ENCODE measurements at regions of chr10 and their contacts with region 1.

Region 1: DNA sequence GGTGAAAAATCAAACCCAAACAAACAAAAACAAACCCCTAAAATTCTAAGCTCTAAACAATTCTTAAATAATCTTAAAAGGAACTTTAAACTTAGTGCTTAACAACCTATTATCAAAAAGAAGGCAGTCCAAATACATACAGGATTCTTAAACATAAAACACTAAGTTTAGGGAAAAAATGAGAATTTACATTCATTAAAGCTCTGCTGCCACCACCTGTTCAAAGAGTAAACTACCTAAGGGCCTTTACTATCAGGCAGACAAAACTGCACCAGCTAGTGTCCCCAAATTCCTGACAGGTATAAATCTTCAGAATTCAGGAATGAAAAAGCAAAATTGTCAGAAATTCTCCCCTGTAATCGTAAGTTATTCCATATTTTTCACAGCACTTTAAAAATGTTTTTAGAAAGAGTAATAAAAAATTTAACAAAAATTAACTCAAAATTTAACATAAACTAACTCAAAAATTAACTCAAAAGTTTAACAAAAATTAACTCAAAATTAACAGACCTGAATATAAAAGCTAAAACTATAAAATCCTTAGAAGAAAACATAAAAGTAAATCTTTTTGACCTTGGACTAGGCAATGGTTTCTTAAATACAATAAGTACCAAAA is 55.1 kb downstream of the PDZD8 start:
- DNase-seq: peak; percentile 23
- H3K4me3 ChIP-seq: no peak overlapping the region; a peak in 1 of 4 replicates
- H3K27ac ChIP-seq: no peak overlapping the region
- H3K4me1 ChIP-seq: no peaks in the 10 kb centered on the region
- H3K27me3 ChIP-seq: no peaks in the 10 kb centered on the region
- CTCF ChIP-seq: peak; percentile 72
- EP300 ChIP-seq: no peak
- RAD21 ChIP-seq: peak; percentile 79

Region 2: GRCh38 chr10:117148284-117148683 is 171.9 kb before region 1 on chr10:
- CTCF ChIA-PET with region 1: no interaction called
- POLR2A ChIA-PET with region 1: no interaction called
- DNase-seq: no peak
- H3K4me3 ChIP-seq: no peak overlapping the region
- H3K27ac ChIP-seq: no peak overlapping the region
- H3K4me1 ChIP-seq: no peaks in the 10 kb centered on the region; a peak in 1 of 4 replicates
- H3K27me3 ChIP-seq: peaks cover 3% of the 10 kb centered on the region; the same call in 1 of the 2 replicates
- CTCF ChIP-seq: no peak
- EP300 ChIP-seq: no peak
- RAD21 ChIP-seq: no peak

Region 3: GRCh38 chr10:117204316-117204715 is 115.8 kb before region 1 on chr10:
- CTCF ChIA-PET with region 1: interaction called, 37 read pairs
- POLR2A ChIA-PET with region 1: no interaction called
- DNase-seq: no peak
- H3K4me3 ChIP-seq: no peak overlapping the region
- H3K27ac ChIP-seq: no peak overlapping the region
- H3K4me1 ChIP-seq: no peaks in the 10 kb centered on the region
- H3K27me3 ChIP-seq: no peaks in the 10 kb centered on the region
- CTCF ChIP-seq: no peak
- EP300 ChIP-seq: no peak
- RAD21 ChIP-seq: no peak

Region 4: DNA sequence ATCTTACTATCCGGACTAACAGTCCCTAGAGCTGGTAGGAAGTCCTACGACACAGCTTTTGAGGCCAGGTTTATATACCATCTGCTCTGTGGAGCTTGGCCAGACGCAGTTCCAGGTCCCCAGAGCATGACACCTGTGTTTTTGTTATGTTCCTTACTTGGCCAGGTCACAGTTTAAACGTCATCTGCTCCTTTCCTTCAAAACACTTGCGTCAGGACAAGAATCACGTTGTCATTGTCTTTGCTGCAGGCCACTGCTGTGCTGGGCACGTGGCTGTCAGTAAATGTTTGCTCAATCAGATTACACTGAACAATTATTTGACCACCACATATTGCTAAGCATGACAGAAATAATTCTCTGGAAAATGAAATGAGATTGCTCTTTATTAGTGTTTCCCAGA is 55.4 kb before region 1 on chr10:
- CTCF ChIA-PET with region 1: interaction called, 11 read pairs
- POLR2A ChIA-PET with region 1: no interaction called
- DNase-seq: no peak
- H3K4me3 ChIP-seq: no peak overlapping the region
- H3K27ac ChIP-seq: peak overlapping the region in 1 of 2 experiments; percentile 51; a peak in 2 of 4 replicates
- H3K4me1 ChIP-seq: peaks cover 0 to 25% of the 10 kb centered on the region in 2 experiments; a peak in 1 of 4 replicates
- H3K27me3 ChIP-seq: no peaks in the 10 kb centered on the region; the same call in 1 of the 2 replicates
- CTCF ChIP-seq: no peak
- EP300 ChIP-seq: no peak
- RAD21 ChIP-seq: no peak

Region 5: GRCh38 chr10:117300671-117301070 is 19.5 kb before region 1 on chr10:
- CTCF ChIA-PET with region 1: interaction called, 28 read pairs
- POLR2A ChIA-PET with region 1: no interaction called
- DNase-seq: no peak
- H3K4me3 ChIP-seq: no peak overlapping the region
- H3K27ac ChIP-seq: no peak overlapping the region
- H3K4me1 ChIP-seq: no peaks in the 10 kb centered on the region
- H3K27me3 ChIP-seq: no peaks in the 10 kb centered on the region
- CTCF ChIP-seq: no peak
- EP300 ChIP-seq: no peak
- RAD21 ChIP-seq: no peak

Region 6: DNA sequence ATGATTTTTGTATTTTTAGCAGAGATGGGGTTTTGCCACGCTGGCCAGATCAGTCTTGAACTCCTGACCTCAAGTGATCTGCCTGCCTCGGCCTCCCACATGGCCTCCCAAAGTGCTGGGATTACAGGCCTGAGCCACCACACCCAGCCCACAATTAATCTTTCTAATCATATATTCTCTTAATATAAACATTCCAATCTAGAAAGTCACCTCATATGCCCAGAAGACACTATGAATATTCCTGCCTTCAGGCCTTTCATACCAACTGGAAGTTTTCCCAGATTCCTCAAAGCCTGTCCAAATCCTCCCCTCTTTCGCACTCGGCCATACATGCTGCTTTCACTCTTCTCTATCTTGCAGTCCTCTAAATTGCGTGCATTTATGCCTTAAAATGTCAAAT is 22.5 kb after region 1 on chr10:
- CTCF ChIA-PET with region 1: interaction called, 19 read pairs
- POLR2A ChIA-PET with region 1: interaction called, 3 read pairs
- DNase-seq: no peak
- H3K4me3 ChIP-seq: no peak overlapping the region
- H3K27ac ChIP-seq: peak overlapping the region in 1 of 2 experiments; percentile 25; a peak in 2 of 4 replicates
- H3K4me1 ChIP-seq: peaks cover 0 to 7% of the 10 kb centered on the region in 2 experiments; a peak in 1 of 4 replicates
- H3K27me3 ChIP-seq: no peaks in the 10 kb centered on the region
- CTCF ChIP-seq: no peak
- EP300 ChIP-seq: no peak
- RAD21 ChIP-seq: no peak

Region 7: GRCh38 chr10:117442944-117443685 is 123.0 kb after region 1 on chr10:
- CTCF ChIA-PET with region 1: interaction called, 11 read pairs
- POLR2A ChIA-PET with region 1: no interaction called
- DNase-seq: peak; percentile 76
- H3K4me3 ChIP-seq: no peak overlapping the region; a peak in 1 of 4 replicates
- H3K27ac ChIP-seq: no peak overlapping the region
- H3K4me1 ChIP-seq: no peaks in the 10 kb centered on the region; a peak in 1 of 4 replicates
- H3K27me3 ChIP-seq: no peaks in the 10 kb centered on the region
- CTCF ChIP-seq: peak; percentile 64
- EP300 ChIP-seq: no peak
- RAD21 ChIP-seq: peak; percentile 59

Region 8: DNA sequence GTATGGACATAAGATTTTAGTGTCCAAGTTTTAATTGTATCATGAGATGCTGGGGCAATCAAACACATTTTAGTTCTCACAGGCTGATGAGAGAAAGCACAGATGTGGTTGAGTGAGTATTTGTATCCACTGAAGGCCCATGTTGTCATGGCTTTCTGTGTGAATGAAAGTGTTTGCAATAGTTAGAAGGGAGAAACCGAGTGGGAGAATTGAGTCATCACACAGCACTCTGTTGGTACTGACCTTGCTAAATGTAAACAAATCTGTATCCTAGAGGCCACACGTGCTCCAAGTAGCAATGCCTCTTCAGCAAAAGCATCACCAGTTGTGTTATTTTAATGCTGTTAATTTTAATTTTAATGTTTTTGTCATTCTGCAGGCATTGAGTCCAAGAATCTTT is 343.6 kb after region 1 on chr10:
- CTCF ChIA-PET with region 1: no interaction called
- POLR2A ChIA-PET with region 1: no interaction called
- DNase-seq: no peak
- H3K4me3 ChIP-seq: no peak overlapping the region
- H3K27ac ChIP-seq: no peak overlapping the region
- H3K4me1 ChIP-seq: no peaks in the 10 kb centered on the region
- H3K27me3 ChIP-seq: no peaks in the 10 kb centered on the region
- CTCF ChIP-seq: no peak
- EP300 ChIP-seq: no peak
- RAD21 ChIP-seq: no peak

Measured in SK-N-SH (cell line).